GM13977 (cell line): ENCODE measurements at regions of chr6 and their contacts with region 1.

Region 1: DNA sequence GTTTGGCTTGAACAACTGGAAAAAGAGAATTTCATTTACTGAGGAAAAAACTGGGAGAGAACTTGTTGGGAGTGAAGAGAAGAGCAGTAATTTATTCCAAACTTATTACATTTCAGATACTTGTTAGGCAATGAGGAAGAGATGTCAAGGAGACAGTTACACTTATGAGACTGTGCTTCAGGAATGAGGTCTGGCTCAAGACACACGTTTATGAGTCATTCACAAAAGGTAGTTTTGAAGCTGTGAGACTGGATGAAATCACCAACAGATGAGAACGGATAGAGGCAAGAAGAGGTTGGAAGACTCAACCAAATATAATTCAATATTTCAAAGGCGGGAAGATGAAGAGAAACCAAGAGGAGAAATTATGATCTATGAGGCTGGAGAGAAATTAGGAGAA is 70.6 kb upstream of the DEFB112 start:
- DNase-seq: no peak
- CTCF ChIP-seq: no peak

Region 2: GRCh38 chr6:49866485-49866943 is 253.8 kb before region 1 on chr6 and contains the start of gene CRISP1:
- in situ Hi-C with region 1: no loop called
- DNase-seq: no peak
- CTCF ChIP-seq: no peak

Region 3: DNA sequence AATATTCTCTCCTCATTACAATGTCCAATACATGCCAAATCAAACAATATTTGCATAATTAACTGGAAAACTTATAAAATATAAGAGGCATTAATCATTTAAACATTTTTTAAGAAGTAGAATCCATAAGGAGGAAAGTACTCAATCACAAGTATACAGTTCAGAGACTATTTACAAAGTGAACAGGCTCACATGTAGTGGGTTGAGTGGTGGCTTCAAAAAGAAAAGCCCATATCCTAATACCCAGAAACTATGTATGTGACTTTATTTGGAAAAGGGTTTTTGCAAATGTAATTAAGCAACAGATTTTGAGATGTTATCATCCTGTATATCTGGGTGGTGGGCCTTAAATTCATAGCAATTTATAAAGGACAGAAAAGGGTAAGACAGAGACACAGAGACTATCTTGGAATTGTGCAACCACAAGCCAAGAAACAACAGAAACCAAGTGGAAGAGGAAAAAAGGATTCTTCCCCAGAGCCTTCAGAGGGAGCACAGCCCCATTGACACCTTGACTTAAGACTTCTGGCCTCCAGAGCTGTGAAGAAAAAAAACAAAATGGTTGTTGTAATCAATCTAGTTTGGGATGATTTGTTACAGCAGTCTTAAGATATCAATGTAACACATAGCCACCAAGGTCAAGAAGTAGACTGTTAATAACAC is 221.3 kb before region 1 on chr6:
- in situ Hi-C with region 1: no loop called
- DNase-seq: no peak
- CTCF ChIP-seq: no peak

Region 4: DNA sequence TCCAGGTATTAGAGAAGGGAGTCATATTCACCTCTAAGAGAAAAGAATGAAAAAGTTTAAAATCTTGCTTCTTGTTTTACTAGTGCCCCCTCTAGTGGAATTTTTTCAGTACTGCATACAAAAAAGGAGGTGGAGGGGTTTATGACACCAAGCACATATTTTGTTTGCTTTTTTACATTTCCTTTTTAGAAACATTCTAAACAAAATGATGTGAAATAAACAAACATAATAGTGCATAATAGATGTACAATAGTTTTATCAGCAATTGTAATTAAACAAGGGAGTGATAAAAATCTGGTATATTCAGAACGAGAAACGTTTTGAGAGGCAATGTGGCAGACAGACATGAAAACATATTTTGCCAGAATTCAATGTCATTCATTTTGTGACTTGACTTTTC is 482.0 kb after region 1 on chr6:
- in situ Hi-C with region 1: loop called (anchors 25 kb)
- DNase-seq: peak; percentile 6
- CTCF ChIP-seq: peak; percentile 64